ENCODE measurements at regions of chr5 and their contacts with region 1.

Region 1: GRCh38 chr5:139808493-139809139 is 13.0 kb downstream of the PSD2 start:
- DNase-seq: peak in 1 of 2 experiments; percentile 88
- H3K4me3 ChIP-seq: no peak overlapping the region
- H3K27ac ChIP-seq: no peak overlapping the region
- H3K4me1 ChIP-seq: no peaks in the 10 kb centered on the region
- H3K27me3 ChIP-seq: peaks cover 0 to 3% (median 1%) of the 10 kb centered on the region in 4 experiments; a peak in 1 of 7 replicates
- CTCF ChIP-seq: no peak
- EP300 ChIP-seq: no peak
- POLR2A ChIP-seq: no peak
- RAD21 ChIP-seq: no peak

Region 2: GRCh38 chr5:139458580-139459406 is 349.8 kb before region 1 on chr5:
- CTCF ChIA-PET with region 1: no interaction called
- POLR2A ChIA-PET with region 1: no interaction called
- DNase-seq: no peak
- H3K4me3 ChIP-seq: no peak overlapping the region
- H3K27ac ChIP-seq: no peak overlapping the region
- H3K4me1 ChIP-seq: peaks cover 5 to 15% (median 12%) of the 10 kb centered on the region in 4 experiments; a peak in 6 of 7 replicates
- H3K27me3 ChIP-seq: no peaks in the 10 kb centered on the region
- CTCF ChIP-seq: no peak
- EP300 ChIP-seq: no peak
- POLR2A ChIP-seq: no peak
- RAD21 ChIP-seq: no peak

Region 3: GRCh38 chr5:139795074-139796001 is 13.3 kb before region 1 on chr5 and contains the start of gene PSD2:
- CTCF ChIA-PET with region 1: interaction called, 35 read pairs
- POLR2A ChIA-PET with region 1: interaction called, 5 read pairs
- DNase-seq: peak in 1 of 2 experiments; percentile 73
- H3K4me3 ChIP-seq: peak within 1 kb of the TSS; percentile 35 to 81 (median 50)
- H3K27ac ChIP-seq: no peak within 1 kb of the TSS
- H3K4me1 ChIP-seq: peaks cover 2 to 7% (median 2%) of the 10 kb centered on the region in 4 experiments; a peak in 3 of 7 replicates
- H3K27me3 ChIP-seq: peaks cover 41 to 74% (median 61%) of the 10 kb centered on the region in 4 experiments
- CTCF ChIP-seq: no peak
- EP300 ChIP-seq: no peak
- POLR2A ChIP-seq: no peak
- RAD21 ChIP-seq: no peak
- total RNA-seq, gene PSD2: 0.06 and 0.13 TPM in 2 replicates

Region 4: GRCh38 chr5:140073296-140073695 is 264.7 kb after region 1 on chr5:
- CTCF ChIA-PET with region 1: no interaction called
- POLR2A ChIA-PET with region 1: no interaction called
- DNase-seq: no peak
- H3K4me3 ChIP-seq: no peak overlapping the region
- H3K27ac ChIP-seq: no peak overlapping the region
- H3K4me1 ChIP-seq: no peaks in the 10 kb centered on the region
- H3K27me3 ChIP-seq: no peaks in the 10 kb centered on the region
- CTCF ChIP-seq: peak in 2 of 3 experiments; percentile 7 to 22; a peak in 2 of 4 replicates
- EP300 ChIP-seq: no peak
- POLR2A ChIP-seq: no peak
- RAD21 ChIP-seq: peak in 1 of 2 experiments; percentile 32; a peak in 3 of 4 replicates

Measured in H1 (cell line).